CD4-positive, alpha-beta T cell (primary cell): ENCODE measurements at regions of chr15 and their contacts with region 1.

Region 1: GRCh38 chr15:84992157-84992944 is 10.7 kb downstream of the PDE8A start:
- DNase-seq: peak in 4 of 14 experiments; percentile 15 to 48 (median 31)
- ATAC-seq: no peak
- H3K4me3 ChIP-seq: no peak overlapping the region
- H3K4me3 Mint-ChIP-seq: no peak overlapping the region
- H3K27ac ChIP-seq: no peak overlapping the region
- H3K27ac Mint-ChIP-seq: no peak overlapping the region
- H3K4me1 ChIP-seq: peaks cover 29% of the 10 kb centered on the region
- H3K4me1 Mint-ChIP-seq: peaks cover 60% of the 10 kb centered on the region
- H3K27me3 ChIP-seq: no peaks in the 10 kb centered on the region
- H3K27me3 Mint-ChIP-seq: no peaks in the 10 kb centered on the region
- CTCF ChIP-seq: no peak

Region 2: DNA sequence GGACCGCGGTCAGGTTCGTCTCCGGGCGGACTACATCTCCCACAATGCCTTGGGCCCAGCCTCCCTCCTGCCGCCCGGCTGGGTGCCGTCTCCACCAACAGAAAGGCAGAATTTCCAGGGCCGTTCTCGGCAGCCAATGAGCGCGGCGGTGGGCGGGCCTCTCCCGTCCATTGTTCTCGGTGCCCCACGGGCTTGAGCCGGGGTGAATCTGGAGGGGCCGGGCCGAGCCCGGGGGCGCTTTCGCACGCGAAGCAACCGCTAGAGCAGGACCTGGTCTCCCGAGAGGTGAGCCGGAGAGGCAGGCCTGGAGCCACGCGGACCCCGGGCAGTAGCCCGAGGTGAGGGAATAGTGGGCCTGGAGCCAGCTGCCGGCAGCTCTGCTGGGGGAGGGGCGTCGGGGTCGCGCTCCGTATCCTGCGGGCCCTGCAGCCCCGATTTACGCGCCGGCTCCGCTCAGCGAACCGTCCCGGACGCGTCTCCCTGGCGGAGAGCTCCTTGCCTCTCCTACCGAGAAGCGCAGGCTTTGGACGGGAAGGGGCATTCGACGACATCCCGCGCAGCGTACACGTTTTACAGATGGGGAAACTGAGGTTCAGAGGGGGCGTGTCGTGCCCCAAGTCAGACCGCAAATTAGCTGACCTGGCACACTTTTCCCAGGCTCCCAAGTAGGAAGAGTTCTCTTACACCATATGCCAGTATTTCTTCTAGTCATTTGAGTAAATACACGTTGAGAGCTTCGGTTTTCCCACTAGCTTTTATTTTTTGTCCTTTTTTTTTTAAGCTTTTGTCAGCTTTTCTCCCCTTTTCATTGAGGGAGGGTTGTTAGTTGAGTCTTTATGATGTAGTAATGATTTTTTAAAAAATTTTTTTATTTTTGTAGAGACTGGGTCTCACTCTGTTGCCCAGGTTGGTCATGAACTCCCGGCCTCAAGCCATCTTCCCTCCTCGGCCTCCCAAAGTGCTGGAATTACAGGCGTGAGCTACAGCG is 391.2 kb before region 1 on chr15 and contains the start of gene ZSCAN2:
- CTCF ChIA-PET with region 1: no interaction called
- POLR2A ChIA-PET with region 1: no interaction called
- intact Hi-C with region 1: loop called in 1 of 2 experiments (anchors 5 kb)
- DNase-seq: peak; percentile 87 to 95 (median 90)
- ATAC-seq: peak; percentile 97
- H3K4me3 ChIP-seq: peak within 1 kb of the TSS; percentile 95
- H3K4me3 Mint-ChIP-seq: peak within 1 kb of the TSS; percentile 98
- H3K27ac ChIP-seq: peak within 1 kb of the TSS in 1 of 2 donors; percentile 13
- H3K27ac Mint-ChIP-seq: peak within 1 kb of the TSS; percentile 78
- H3K4me1 ChIP-seq: peaks cover 62% of the 10 kb centered on the region
- H3K4me1 Mint-ChIP-seq: peaks cover 72% of the 10 kb centered on the region
- H3K27me3 ChIP-seq: no peaks in the 10 kb centered on the region
- H3K27me3 Mint-ChIP-seq: no peaks in the 10 kb centered on the region
- CTCF ChIP-seq: no peak
- total RNA-seq, gene ZSCAN2: 3.8 to 5.0 TPM

Region 3: DNA sequence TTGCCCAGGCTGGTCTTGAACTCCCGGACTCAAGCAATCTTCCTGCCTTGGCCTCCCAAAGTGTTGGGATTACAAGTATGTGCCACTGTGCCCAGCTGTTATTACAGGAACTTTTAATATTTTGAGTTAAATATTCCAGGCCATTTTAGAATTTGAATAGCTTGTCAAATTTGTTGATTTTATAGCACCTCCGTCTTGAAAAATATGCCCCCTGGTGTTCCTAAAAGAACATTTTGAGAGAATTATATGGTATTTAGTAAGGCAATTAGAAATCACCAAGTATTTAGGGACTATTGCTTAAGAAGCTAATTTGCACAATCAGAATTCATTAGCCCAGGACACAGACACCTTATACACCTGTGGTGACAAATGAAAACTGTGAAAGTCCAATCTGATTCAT is 13.0 kb after region 1 on chr15:
- CTCF ChIA-PET with region 1: interaction called, 9 read pairs
- POLR2A ChIA-PET with region 1: interaction called, 11 read pairs
- intact Hi-C with region 1: no loop called
- DNase-seq: no peak
- ATAC-seq: no peak
- H3K4me3 ChIP-seq: no peak overlapping the region
- H3K4me3 Mint-ChIP-seq: no peak overlapping the region
- H3K27ac ChIP-seq: no peak overlapping the region
- H3K27ac Mint-ChIP-seq: no peak overlapping the region
- H3K4me1 ChIP-seq: peaks cover 29% of the 10 kb centered on the region
- H3K4me1 Mint-ChIP-seq: peaks cover 82% of the 10 kb centered on the region
- H3K27me3 ChIP-seq: no peaks in the 10 kb centered on the region
- H3K27me3 Mint-ChIP-seq: no peaks in the 10 kb centered on the region
- CTCF ChIP-seq: no peak

Region 4: DNA sequence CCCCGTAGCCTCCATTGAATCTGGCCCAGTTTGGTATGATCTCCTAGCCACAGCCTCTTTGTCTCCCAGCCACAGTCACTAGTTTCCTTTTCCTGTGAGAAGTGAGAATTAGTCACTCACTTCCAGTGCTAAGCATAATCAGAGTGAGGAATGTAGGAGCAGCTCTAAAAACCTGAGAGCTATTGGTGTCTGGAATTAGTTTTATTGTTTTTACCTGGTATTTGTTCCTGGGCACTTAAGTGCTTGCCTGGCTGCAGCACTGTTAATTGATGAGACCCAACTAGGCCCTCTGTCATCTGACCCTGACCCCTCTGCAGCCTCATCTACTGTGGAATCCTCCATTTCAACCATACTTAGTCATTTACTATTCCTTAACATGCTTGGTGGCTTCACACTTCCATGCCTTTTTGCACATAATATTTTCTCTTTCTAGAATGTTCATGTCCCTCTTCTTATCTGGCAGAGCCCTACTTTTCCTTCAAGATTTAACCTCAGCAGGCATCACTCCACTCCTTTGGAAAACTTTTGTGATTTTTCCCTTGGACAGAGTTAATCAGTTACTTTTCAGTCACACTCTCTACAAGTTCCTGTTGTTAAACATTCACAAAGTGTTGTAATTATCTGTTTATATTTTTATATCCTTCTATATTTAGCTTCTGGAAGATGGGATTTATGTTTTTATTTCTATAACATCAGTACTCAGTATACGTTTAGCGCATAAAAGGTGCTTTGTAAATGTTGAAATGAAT is 38.1 kb after region 1 on chr15:
- CTCF ChIA-PET with region 1: no interaction called
- POLR2A ChIA-PET with region 1: interaction called, 12 read pairs
- intact Hi-C with region 1: no loop called
- DNase-seq: peak in 4 of 14 experiments; percentile 16 to 40 (median 26)
- ATAC-seq: no peak
- H3K4me3 ChIP-seq: no peak overlapping the region
- H3K4me3 Mint-ChIP-seq: peak overlapping the region; percentile 21
- H3K27ac ChIP-seq: no peak overlapping the region
- H3K27ac Mint-ChIP-seq: peak overlapping the region; percentile 69
- H3K4me1 ChIP-seq: peaks cover 35% of the 10 kb centered on the region
- H3K4me1 Mint-ChIP-seq: peaks cover 65% of the 10 kb centered on the region
- H3K27me3 ChIP-seq: no peaks in the 10 kb centered on the region
- H3K27me3 Mint-ChIP-seq: no peaks in the 10 kb centered on the region
- CTCF ChIP-seq: no peak

Region 5: GRCh38 chr15:85044251-85044853 is 52.0 kb after region 1 on chr15:
- CTCF ChIA-PET with region 1: no interaction called
- POLR2A ChIA-PET with region 1: interaction called, 3 read pairs
- intact Hi-C with region 1: loop called in 1 of 2 experiments (anchors 5 kb)
- DNase-seq: peak; percentile 18 to 76 (median 40)
- ATAC-seq: peak; percentile 65
- H3K4me3 ChIP-seq: no peak overlapping the region
- H3K4me3 Mint-ChIP-seq: no peak overlapping the region
- H3K27ac ChIP-seq: no peak overlapping the region
- H3K27ac Mint-ChIP-seq: no peak overlapping the region
- H3K4me1 ChIP-seq: no peaks in the 10 kb centered on the region
- H3K4me1 Mint-ChIP-seq: peaks cover 42% of the 10 kb centered on the region
- H3K27me3 ChIP-seq: no peaks in the 10 kb centered on the region
- H3K27me3 Mint-ChIP-seq: no peaks in the 10 kb centered on the region
- CTCF ChIP-seq: peak; percentile 62